ENCODE measurements at regions of chr4 and their contacts with region 1.

Region 1: DNA sequence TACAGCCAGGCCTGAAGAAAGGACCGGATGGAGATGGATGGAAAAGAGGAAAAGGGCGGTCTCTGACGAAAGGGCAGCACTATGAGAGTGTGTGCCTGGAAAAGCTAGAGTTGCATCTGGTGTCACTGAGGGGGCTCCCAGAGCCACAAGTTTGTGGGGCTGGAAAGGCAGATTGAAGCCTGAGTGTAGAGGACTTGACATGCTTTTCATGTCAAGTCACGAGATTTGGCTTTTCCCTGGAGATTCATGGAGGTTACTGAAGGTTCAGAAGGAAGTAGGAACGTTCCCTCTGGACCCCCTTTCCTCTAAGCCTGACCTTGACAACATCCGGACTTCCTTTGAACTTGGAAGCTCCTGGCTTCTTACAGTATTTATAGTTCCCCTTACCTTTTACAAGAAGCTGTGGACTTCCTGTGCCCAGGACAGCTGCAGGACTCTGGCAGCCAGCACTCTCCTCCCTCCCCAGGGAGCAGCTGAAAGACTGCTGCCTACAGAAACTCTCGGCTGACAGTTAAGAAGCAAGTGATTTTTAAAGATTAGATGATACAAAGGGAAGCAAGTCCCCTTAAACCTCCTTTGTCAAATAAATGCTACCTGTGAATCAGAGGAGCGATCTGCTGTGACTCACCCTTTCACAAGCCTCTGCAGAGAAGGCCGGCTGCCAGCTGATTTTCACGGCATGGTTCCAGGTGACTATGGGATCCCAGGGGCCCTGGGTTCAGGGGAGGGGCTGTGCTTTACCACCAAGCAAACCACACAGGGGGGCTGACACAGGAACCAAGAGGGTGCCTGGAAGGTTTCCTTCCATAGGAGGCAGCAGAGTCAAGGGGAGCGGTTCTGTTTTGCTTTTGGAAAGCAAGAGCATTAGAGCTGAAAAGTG is 72.9 kb upstream of the STIM2 start:
- DNase-seq: peak; percentile 96
- ATAC-seq: peak; percentile 89
- H3K4me3 ChIP-seq: peak overlapping the region; percentile 38
- H3K27ac ChIP-seq: peak overlapping the region; percentile 97
- H3K4me1 ChIP-seq: peaks cover 39% of the 10 kb centered on the region
- H3K27me3 ChIP-seq: no peaks in the 10 kb centered on the region
- CTCF ChIP-seq: peak; percentile 50

Region 2: DNA sequence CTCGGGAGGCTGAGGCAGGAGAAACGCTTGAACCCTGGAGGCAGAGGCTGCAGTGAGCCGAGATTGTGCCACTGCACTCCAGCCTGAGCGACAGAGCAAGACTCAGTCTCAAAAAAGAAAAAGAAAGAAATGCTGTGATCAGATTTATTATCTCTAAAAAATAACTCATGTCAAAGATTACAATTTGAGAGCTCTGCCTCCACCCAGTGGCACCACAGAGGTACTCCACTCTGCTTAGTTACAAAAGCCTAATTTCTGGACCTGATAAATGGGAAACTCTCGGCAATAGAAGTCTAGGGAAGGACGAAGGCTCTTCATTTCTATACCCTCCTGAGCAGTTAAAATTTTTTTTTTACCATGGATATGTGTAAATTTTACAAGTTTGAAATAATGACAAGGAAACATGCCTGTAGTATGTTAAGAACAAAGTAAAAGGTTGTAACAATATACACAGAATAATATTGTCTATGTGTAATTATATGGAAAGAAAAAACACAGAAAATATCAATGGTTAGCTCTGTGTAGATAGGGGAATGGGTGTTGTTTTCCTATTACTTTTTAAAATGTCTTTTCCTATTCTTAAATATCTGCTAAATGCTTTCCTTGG is 222.7 kb after region 1 on chr4:
- CTCF ChIA-PET with region 1: interaction called, 9 read pairs
- POLR2A ChIA-PET with region 1: no interaction called
- intact Hi-C with region 1: loop called (anchors 2 kb)
- DNase-seq: peak; percentile 66
- ATAC-seq: peak; percentile 25; the same call in 1 of the 2 replicates
- H3K4me3 ChIP-seq: no peak overlapping the region
- H3K27ac ChIP-seq: no peak overlapping the region; the same call in 1 of the 2 replicates
- H3K4me1 ChIP-seq: peaks cover 53% of the 10 kb centered on the region
- H3K27me3 ChIP-seq: no peaks in the 10 kb centered on the region
- CTCF ChIP-seq: peak; percentile 73